Thyroid gland (tissue), 4 donors: ENCODE measurements at regions of chr16 and their contacts with region 1.

Region 1: DNA sequence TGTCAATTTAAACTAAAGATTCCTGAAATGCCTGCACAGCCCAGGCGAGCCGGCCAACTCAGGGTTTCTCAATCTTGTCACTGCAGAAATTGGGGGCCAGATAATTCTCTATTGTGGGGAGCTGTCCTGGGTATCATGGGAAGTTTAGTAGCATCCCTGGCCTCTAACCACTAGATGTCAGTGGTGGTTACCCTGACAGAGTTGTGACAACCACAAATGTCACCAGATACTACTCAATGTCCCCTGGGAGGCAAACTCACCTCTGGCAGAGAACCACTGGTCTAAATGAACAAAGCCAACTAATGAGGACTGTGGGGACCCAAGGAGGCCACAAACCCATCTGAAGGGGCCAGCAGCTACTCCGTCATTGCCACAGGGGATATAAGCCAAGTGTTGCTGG is 90.9 kb downstream of the MYH11 start:
- DNase-seq: peak; percentile 40 to 53
- H3K4me3 ChIP-seq: no peak overlapping the region
- H3K27ac ChIP-seq: no peak overlapping the region
- H3K4me1 ChIP-seq: no peaks in the 10 kb centered on the region
- H3K27me3 ChIP-seq: no peaks in the 10 kb centered on the region
- CTCF ChIP-seq: peak in 5 of 6 experiments; percentile 42 to 80 (median 74)
- POLR2A ChIP-seq: no peak

Region 2: GRCh38 chr16:15482068-15482747 is 283.7 kb before region 1 on chr16:
- intact Hi-C with region 1: no loop called
- DNase-seq: peak; percentile 23 to 38
- H3K4me3 ChIP-seq: no peak overlapping the region
- H3K27ac ChIP-seq: peak overlapping the region in 2 of 3 donors; percentile 62 to 72
- H3K4me1 ChIP-seq: peaks cover 0 to 6% of the 10 kb centered on the region in 2 donors
- H3K27me3 ChIP-seq: no peaks in the 10 kb centered on the region
- CTCF ChIP-seq: peak in 1 of 6 experiments; percentile 8
- POLR2A ChIP-seq: no peak

Region 3: GRCh38 chr16:15643048-15643945 is 122.6 kb before region 1 on chr16 and contains the start of gene MARF1:
- intact Hi-C with region 1: no loop called
- DNase-seq: peak; percentile 98 to 99
- H3K4me3 ChIP-seq: peak within 1 kb of the TSS; percentile 51 to 88 (median 66)
- H3K27ac ChIP-seq: peak within 1 kb of the TSS; percentile 95 to 99 (median 97)
- H3K4me1 ChIP-seq: peaks cover 10 to 15% of the 10 kb centered on the region in 2 donors
- H3K27me3 ChIP-seq: no peaks in the 10 kb centered on the region
- CTCF ChIP-seq: peak in 5 of 6 experiments; percentile 15 to 61 (median 38)
- POLR2A ChIP-seq: peak; percentile 99 to 100
- total RNA-seq, gene MARF1: 50.7 to 55.5 (median 53.1) TPM

Region 4: DNA sequence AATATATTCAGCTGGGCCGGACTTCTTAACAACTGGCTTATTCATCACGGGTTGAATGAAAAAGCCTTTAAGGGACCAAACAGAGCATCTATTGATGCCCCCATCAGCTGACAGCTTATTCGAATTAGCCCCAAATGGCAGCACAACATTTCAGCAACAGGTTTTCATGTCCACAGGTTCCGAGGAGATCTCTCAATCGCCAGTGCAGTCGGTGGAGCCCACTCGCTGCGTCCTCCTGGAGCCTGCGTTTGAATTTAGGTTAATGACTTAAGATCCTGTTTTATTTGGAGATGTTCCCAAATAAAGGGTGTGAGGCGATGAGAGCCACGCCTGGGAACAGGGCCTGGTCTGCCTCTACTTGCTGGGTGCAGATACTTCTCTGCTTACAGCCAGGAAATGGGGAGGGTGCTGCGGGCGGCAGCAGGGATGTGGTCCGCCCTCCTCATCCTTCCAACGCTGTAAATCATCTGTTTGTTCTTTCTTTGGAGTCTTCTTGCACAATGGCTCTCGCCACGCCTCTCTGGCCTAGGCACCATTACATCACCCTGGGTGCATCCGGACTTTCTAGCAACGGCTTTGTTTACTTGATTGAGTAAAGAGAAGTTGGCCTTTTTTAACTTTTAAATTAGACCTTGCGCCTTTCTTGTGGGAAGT is 93.2 kb before region 1 on chr16:
- intact Hi-C with region 1: no loop called
- DNase-seq: peak; percentile 56
- H3K4me3 ChIP-seq: no peak overlapping the region
- H3K27ac ChIP-seq: peak overlapping the region; percentile 73 to 81 (median 77)
- H3K4me1 ChIP-seq: peaks cover 0 to 7% of the 10 kb centered on the region in 2 donors
- H3K27me3 ChIP-seq: no peaks in the 10 kb centered on the region
- CTCF ChIP-seq: no peak
- POLR2A ChIP-seq: no peak

Region 5: DNA sequence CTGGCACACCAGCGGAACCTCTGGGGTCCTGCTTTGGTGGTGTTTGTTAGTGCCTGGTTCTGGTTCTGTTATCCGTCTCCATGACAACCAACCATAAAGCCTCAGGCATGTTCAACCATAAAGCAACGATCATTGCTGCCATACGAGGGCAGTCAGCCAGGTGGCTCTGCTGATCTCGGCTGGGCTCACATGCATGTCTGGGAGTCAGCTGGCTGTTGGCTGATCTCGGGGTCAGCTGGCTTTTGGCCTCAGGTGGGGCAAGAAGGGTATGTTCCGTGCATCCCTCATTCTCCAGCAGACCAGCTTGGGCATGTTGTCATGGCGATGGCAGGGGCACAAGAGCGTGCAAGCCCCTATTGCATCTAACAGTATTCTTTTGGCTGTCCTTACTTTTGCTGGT is 371.2 kb after region 1 on chr16:
- intact Hi-C with region 1: loop called (anchors 10 kb)
- DNase-seq: no peak
- H3K4me3 ChIP-seq: no peak overlapping the region
- H3K27ac ChIP-seq: no peak overlapping the region
- H3K4me1 ChIP-seq: no peaks in the 10 kb centered on the region
- H3K27me3 ChIP-seq: no peaks in the 10 kb centered on the region
- CTCF ChIP-seq: no peak
- POLR2A ChIP-seq: no peak

Region 6: GRCh38 chr16:16191493-16192167 is 425.8 kb after region 1 on chr16:
- intact Hi-C with region 1: loop called (anchors 10 kb)
- DNase-seq: no peak
- H3K4me3 ChIP-seq: no peak overlapping the region
- H3K27ac ChIP-seq: no peak overlapping the region
- H3K4me1 ChIP-seq: no peaks in the 10 kb centered on the region
- H3K27me3 ChIP-seq: no peaks in the 10 kb centered on the region
- CTCF ChIP-seq: no peak
- POLR2A ChIP-seq: no peak